ENCODE measurements at regions of chr16 and their contacts with region 1.

Region 1: GRCh38 chr16:48164907-48165726 is 9.3 kb upstream of the ABCC12 start:
- DNase-seq: peak; percentile 62 to 63
- ATAC-seq: peak; percentile 85 to 90
- H3K4me3 ChIP-seq: no peak overlapping the region
- H3K27ac ChIP-seq: peak overlapping the region in 1 of 4 donors; percentile 29
- H3K4me1 ChIP-seq: peaks cover 0 to 2% of the 10 kb centered on the region in 2 donors
- H3K27me3 ChIP-seq: no peaks in the 10 kb centered on the region
- CTCF ChIP-seq: peak; percentile 77 to 88 (median 81)
- POLR2A ChIP-seq: no peak

Region 2: DNA sequence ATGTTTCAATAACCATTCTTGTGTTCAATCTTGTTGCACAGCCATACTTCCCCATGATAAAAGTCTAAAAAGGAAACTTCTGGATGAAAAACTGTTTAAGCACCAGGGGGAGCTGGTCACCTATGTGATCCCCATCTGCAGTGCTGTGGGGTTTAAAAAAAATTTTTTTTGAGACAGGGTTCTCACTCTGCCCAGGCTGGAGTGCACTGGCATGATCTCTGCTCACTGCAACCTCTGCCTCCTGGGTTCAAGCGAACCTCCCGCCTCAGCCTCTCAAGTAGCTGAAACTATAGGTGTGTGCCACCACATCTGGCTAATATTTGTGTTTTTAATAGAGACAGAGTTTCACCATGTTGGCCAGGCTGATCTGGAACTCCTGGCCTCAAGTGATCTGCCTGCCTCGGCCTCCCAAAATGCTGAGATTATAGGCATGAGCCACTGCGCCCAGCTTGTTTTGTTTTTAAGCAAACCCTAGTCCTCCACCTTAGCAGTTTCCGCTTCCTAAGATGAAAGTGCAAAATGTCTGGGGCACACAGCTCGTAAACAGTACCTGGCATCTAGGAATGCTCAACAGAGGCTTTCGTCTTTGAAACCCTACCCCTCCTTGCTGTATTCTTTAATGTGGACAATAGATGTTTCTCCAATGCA is 1217.1 kb before region 1 on chr16:
- in situ Hi-C with region 1: no loop called
- intact Hi-C with region 1: loop called (anchors 10 kb)
- DNase-seq: no peak
- ATAC-seq: no peak
- H3K4me3 ChIP-seq: no peak overlapping the region
- H3K27ac ChIP-seq: no peak overlapping the region
- H3K4me1 ChIP-seq: no peaks in the 10 kb centered on the region
- H3K27me3 ChIP-seq: no peaks in the 10 kb centered on the region
- CTCF ChIP-seq: peak in 1 of 5 experiments; percentile 19
- POLR2A ChIP-seq: no peak

Region 3: DNA sequence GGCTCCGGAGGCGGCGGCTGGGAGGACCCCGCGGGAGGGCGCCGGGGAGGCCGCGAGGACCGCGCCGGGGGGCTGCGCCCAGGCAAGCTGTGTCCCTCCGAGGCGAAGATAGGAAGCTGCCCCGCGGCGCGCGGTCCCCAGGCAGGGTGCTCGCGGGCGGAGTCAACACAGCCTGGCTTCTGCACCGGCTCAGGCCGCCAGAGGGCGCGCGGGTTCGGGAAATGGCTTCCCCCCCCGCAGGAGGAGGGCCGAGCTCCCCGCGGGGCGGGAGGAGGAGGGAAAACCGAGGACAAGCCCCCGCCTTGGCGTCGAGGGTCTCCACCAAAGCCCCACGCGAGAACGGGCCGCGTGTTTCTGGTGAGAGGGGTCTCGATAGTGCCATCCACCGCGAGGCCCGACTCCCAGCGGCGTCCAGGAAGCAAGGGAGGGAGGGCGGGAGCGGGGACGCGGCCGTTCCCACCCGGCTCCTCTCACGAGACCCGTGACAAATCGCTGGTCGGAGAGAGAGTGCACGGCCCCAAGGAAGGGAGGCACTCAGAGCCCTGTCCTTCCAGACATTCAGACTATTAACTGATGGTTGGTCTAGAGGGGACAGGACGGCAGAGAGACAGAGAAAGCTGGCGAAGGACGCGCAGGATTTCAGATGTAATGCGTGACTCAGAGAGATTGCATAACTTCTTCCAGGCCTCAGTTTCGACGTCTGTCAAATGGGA is 1127.2 kb before region 1 on chr16:
- in situ Hi-C with region 1: loop called (anchors 5 to 10 kb)
- intact Hi-C with region 1: loop called (anchors 1 kb)
- DNase-seq: peak; percentile 56 to 68
- ATAC-seq: peak; percentile 94 to 97
- H3K4me3 ChIP-seq: peak overlapping the region; percentile 64 to 78 (median 66)
- H3K27ac ChIP-seq: peak overlapping the region in 2 of 4 donors; percentile 19 to 46
- H3K4me1 ChIP-seq: no peaks in the 10 kb centered on the region
- H3K27me3 ChIP-seq: no peaks in the 10 kb centered on the region
- CTCF ChIP-seq: peak; percentile 66 to 91 (median 88)
- POLR2A ChIP-seq: no peak

Region 4: DNA sequence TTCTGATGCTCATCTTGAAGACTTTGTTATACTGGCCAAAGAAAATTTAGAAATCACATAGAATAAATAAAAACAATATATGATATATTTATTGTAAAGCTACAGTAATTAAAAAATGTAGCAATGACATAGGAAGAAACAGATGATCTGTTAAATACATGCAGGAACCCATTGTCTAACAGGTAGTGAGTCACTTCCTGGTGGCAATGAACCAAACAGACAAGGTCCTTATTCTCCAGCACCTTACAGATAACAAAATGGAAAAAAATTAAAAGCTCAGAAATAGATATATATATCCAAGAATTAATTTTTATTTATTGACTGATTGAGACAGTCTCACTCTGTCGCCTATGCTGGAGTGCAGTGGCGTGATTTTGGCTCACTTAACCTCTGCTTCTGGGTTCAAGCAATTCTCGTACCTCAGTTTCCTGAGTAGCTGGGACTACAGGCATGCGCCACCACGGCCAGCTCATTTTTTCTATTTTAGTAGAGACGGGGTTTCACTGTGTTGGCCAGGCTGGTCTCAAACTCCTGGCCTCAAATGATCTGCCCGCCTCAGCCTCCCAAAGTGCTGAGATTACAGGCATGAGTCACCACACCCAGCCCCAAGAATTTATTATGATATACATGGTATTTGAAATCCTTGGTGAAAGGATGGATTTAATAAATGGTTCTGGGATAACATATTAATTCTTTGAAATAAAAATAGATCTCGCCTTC is 1028.9 kb before region 1 on chr16:
- in situ Hi-C with region 1: loop called in 3 of 4 experiments (anchors 10 to 25 kb)
- intact Hi-C with region 1: no loop called
- DNase-seq: no peak
- ATAC-seq: no peak
- H3K4me3 ChIP-seq: no peak overlapping the region
- H3K27ac ChIP-seq: peak overlapping the region in 3 of 4 donors; percentile 16 to 54 (median 32)
- H3K4me1 ChIP-seq: no peaks in the 10 kb centered on the region
- H3K27me3 ChIP-seq: no peaks in the 10 kb centered on the region
- CTCF ChIP-seq: no peak
- POLR2A ChIP-seq: no peak

Region 5: DNA sequence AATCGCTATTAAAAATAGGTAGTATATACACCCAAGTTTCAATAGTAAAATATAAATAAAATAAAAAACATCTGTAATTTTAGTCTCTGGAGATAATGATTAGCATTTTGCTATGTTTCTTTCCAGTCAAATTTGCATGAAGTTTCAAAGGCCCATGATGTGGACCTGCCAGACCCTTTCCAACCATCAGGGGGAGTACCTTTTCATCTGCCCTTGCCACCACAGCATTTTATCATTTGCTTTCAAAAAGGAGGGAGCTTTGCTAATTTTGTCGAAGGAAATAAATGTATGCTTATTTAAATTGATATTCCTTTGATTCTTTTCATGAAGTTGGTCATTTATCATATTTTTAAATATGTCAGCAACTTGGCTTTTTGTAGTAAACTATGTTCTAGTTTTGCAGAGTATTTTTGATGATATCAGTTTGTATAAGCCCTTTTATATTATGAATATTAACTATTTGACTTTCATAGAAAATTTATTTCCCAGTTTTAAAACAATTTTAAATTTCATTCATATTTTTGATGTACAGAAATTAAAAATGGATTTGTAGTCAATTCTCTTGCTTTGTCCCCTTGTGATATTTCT is 906.1 kb before region 1 on chr16:
- in situ Hi-C with region 1: no loop called
- intact Hi-C with region 1: loop called (anchors 10 kb)
- DNase-seq: no peak
- ATAC-seq: no peak
- H3K4me3 ChIP-seq: no peak overlapping the region
- H3K27ac ChIP-seq: no peak overlapping the region
- H3K4me1 ChIP-seq: peaks cover 0 to 6% of the 10 kb centered on the region in 2 donors
- H3K27me3 ChIP-seq: no peaks in the 10 kb centered on the region
- CTCF ChIP-seq: peak in 4 of 5 experiments; percentile 33 to 66 (median 49)
- POLR2A ChIP-seq: no peak

Region 6: GRCh38 chr16:48126801-48127644 is 38.1 kb before region 1 on chr16:
- in situ Hi-C with region 1: no loop called
- intact Hi-C with region 1: no loop called
- DNase-seq: peak; percentile 24 to 54
- ATAC-seq: peak; percentile 60 to 89
- H3K4me3 ChIP-seq: no peak overlapping the region
- H3K27ac ChIP-seq: peak overlapping the region; percentile 62 to 71 (median 68)
- H3K4me1 ChIP-seq: peaks cover 26 to 33% of the 10 kb centered on the region in 2 donors
- H3K27me3 ChIP-seq: no peaks in the 10 kb centered on the region
- CTCF ChIP-seq: no peak
- POLR2A ChIP-seq: no peak

Measured in gastrocnemius medialis (tissue), 4 donors.